Activated CD4-positive, alpha-beta memory T cell treated with anti-CD3 and anti-CD28 coated beads for 36 hours (primary cell): ENCODE measurements at regions of chr2 and their contacts with region 1.

Region 1: GRCh38 chr2:101151141-101151858 is at the start of gene TBC1D8:
- DNase-seq: peak; percentile 78
- H3K4me3 Mint-ChIP-seq: peak within 1 kb of the TSS; percentile 66
- H3K27ac Mint-ChIP-seq: no peak within 1 kb of the TSS
- H3K4me1 Mint-ChIP-seq: peaks cover 18% of the 10 kb centered on the region
- H3K27me3 Mint-ChIP-seq: peaks cover 25% of the 10 kb centered on the region
- total RNA-seq, gene TBC1D8: 1.5 to 1.6 TPM

Region 2: GRCh38 chr2:99624677-99625076 is 1526.6 kb before region 1 on chr2:
- CTCF ChIA-PET with region 1: no interaction called
- POLR2A ChIA-PET with region 1: no interaction called
- intact Hi-C with region 1: no loop called
- DNase-seq: no peak
- H3K4me3 Mint-ChIP-seq: no peak overlapping the region
- H3K27ac Mint-ChIP-seq: no peak overlapping the region
- H3K4me1 Mint-ChIP-seq: no peaks in the 10 kb centered on the region
- H3K27me3 Mint-ChIP-seq: no peaks in the 10 kb centered on the region

Region 3: GRCh38 chr2:100580367-100581276 is 570.7 kb before region 1 on chr2:
- CTCF ChIA-PET with region 1: no interaction called
- POLR2A ChIA-PET with region 1: no interaction called
- intact Hi-C with region 1: loop called (anchors 10 kb)
- DNase-seq: peak; percentile 64
- H3K4me3 Mint-ChIP-seq: peak overlapping the region; percentile 71
- H3K27ac Mint-ChIP-seq: peak overlapping the region; percentile 96
- H3K4me1 Mint-ChIP-seq: peaks cover 38% of the 10 kb centered on the region
- H3K27me3 Mint-ChIP-seq: no peaks in the 10 kb centered on the region

Region 4: DNA sequence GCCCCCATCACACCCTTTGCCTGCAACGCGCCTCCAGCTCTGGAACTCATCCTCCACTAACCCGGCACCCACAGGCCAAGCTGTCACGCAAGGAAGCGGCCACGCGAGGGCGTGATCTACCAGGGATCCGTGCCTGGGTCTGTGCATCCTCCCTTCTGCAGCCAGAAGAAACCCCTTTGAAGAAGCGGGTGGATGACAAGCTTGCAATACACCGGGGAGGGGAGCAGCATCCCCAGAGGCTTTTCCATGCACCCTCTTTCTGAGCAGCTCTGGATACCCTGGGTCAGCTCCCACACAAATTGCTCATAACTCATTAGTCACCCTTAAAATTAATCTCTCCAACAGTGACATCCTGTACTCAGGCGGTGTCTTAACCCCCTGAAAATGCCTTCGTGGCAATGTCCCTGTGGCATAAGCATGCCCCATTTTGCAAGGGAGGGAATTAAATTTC is 540.9 kb before region 1 on chr2:
- CTCF ChIA-PET with region 1: interaction called, 3 read pairs
- POLR2A ChIA-PET with region 1: no interaction called
- intact Hi-C with region 1: loop called (anchors 5 kb)
- DNase-seq: peak; percentile 83
- H3K4me3 Mint-ChIP-seq: no peak overlapping the region
- H3K27ac Mint-ChIP-seq: no peak overlapping the region
- H3K4me1 Mint-ChIP-seq: peaks cover 2% of the 10 kb centered on the region
- H3K27me3 Mint-ChIP-seq: peaks cover 6% of the 10 kb centered on the region

Region 5: GRCh38 chr2:100984892-100985379 is 166.4 kb before region 1 on chr2:
- CTCF ChIA-PET with region 1: no interaction called
- POLR2A ChIA-PET with region 1: no interaction called
- intact Hi-C with region 1: no loop called
- DNase-seq: peak; percentile 82
- H3K4me3 Mint-ChIP-seq: no peak overlapping the region
- H3K27ac Mint-ChIP-seq: no peak overlapping the region
- H3K4me1 Mint-ChIP-seq: peaks cover 2% of the 10 kb centered on the region
- H3K27me3 Mint-ChIP-seq: peaks cover 2% of the 10 kb centered on the region

Region 6: DNA sequence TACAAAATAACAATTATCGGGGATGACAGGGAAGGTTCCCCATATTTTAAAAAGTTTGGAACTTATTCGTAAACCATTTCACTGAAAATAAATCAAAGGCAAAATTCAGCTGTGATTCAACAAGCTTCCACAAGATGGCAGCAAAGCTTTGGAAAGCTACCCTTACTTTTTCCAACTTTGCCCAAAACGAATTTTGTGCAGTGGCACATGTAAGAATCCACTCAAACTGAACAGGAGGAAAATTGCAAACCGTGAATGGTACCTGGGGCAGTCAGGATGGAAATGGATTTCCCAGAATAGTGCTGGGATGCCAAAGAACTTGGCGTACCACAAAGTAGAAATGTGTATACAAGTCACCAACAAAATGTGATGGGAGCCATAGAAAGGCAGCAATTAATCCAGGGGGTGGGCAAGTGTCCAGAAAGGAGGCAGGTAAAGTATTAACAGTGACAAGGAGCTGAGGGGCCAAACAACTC is 138.6 kb before region 1 on chr2:
- CTCF ChIA-PET with region 1: interaction called, 17 read pairs
- POLR2A ChIA-PET with region 1: no interaction called
- intact Hi-C with region 1: loop called (anchors 1 kb)
- DNase-seq: peak; percentile 24
- H3K4me3 Mint-ChIP-seq: no peak overlapping the region
- H3K27ac Mint-ChIP-seq: no peak overlapping the region
- H3K4me1 Mint-ChIP-seq: peaks cover 29% of the 10 kb centered on the region
- H3K27me3 Mint-ChIP-seq: no peaks in the 10 kb centered on the region

Region 7: GRCh38 chr2:101036562-101037457 is 114.5 kb before region 1 on chr2:
- CTCF ChIA-PET with region 1: interaction called, 14 read pairs
- POLR2A ChIA-PET with region 1: no interaction called
- intact Hi-C with region 1: loop called (anchors 2 kb)
- DNase-seq: no peak
- H3K4me3 Mint-ChIP-seq: no peak overlapping the region
- H3K27ac Mint-ChIP-seq: no peak overlapping the region
- H3K4me1 Mint-ChIP-seq: no peaks in the 10 kb centered on the region
- H3K27me3 Mint-ChIP-seq: no peaks in the 10 kb centered on the region

Region 8: GRCh38 chr2:101205521-101205998 is 54.3 kb after region 1 on chr2:
- CTCF ChIA-PET with region 1: interaction called, 7 read pairs
- POLR2A ChIA-PET with region 1: interaction called, 3 read pairs
- intact Hi-C with region 1: loop called (anchors 2 kb)
- DNase-seq: peak; percentile 64
- H3K4me3 Mint-ChIP-seq: peak overlapping the region; percentile 20
- H3K27ac Mint-ChIP-seq: no peak overlapping the region
- H3K4me1 Mint-ChIP-seq: peaks cover 2% of the 10 kb centered on the region
- H3K27me3 Mint-ChIP-seq: no peaks in the 10 kb centered on the region